ENCODE measurements at regions of chr17 and their contacts with region 1.

Region 1: DNA sequence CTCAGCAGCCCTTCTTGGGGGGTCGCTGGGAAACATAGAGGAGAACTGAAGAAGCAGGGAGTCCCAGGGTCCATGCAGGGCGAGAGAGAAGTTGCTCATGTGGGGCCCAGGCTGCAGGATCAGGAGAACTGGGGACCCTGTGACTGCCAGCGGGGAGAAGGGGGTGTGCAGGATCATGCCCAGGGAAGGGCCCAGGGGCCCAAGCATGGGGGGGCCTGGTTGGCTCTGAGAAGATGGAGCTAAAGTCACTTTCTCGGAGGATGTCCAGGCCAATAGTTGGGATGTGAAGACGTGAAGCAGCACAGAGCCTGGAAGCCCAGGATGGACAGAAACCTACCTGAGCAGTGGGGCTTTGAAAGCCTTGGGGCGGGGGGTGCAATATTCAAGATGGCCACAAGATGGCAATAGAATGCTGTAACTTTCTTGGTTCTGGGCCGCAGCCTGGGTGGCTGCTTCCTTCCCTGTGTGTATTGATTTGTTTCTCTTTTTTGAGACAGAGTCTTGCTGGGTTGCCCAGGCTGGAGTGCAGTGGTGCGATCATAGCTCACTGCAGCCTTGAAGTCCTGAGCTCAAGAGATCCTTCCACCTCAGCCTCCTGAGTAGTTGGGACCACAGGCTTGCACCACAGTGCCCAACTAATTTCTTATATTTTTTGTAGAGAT is 3.4 kb downstream of the STH start:
- DNase-seq: peak; percentile 73
- H3K4me3 Mint-ChIP-seq: no peak overlapping the region
- H3K27ac Mint-ChIP-seq: no peak overlapping the region
- H3K4me1 Mint-ChIP-seq: no peaks in the 10 kb centered on the region
- H3K27me3 Mint-ChIP-seq: peaks cover 10% of the 10 kb centered on the region
- CTCF ChIP-seq: peak; percentile 90

Region 2: DNA sequence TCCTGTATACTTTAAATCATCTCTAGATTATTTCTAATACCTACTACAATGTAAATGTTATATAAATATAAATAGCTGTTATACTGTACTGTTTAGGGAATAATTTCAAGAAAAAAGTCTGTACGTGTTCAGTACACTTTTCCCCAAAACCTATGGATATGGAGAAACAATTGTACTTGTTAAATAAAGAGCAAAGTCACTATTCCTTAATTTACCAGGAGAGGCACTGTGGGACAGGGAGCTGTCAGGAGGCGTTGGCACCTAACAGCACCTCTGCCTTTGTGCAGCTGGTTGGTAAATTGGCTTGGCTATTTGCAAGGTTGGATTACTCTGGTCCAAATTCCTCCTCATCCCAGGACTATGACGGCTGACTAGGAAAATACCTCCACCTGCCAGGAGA is 190.3 kb before region 1 on chr17:
- CTCF ChIA-PET with region 1: no interaction called
- POLR2A ChIA-PET with region 1: no interaction called
- intact Hi-C with region 1: no loop called
- DNase-seq: peak; percentile 30
- H3K4me3 Mint-ChIP-seq: no peak overlapping the region
- H3K27ac Mint-ChIP-seq: no peak overlapping the region
- H3K4me1 Mint-ChIP-seq: no peaks in the 10 kb centered on the region
- H3K27me3 Mint-ChIP-seq: peaks cover 5% of the 10 kb centered on the region
- CTCF ChIP-seq: peak; percentile 20

Region 3: DNA sequence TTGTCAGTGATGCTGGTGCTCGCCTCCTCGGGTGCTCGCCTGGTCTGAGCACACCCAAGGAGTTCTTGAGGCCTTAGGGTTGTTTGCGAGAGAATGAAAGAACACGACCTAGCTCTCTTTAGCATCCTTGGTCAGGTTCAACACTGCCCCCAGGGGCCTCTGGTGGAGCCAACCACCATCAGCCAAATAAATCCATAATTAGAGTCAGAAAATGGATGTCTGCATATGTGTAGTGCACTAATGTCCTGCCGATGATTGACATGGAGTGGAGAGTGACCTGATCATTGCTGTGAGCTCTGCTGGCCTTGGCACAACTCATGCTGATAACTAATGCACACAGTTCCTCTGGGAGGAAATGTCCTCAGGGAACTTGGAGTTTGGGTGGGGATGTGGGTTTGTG is 11.6 kb before region 1 on chr17:
- CTCF ChIA-PET with region 1: interaction called, 14 read pairs
- POLR2A ChIA-PET with region 1: interaction called, 3 read pairs
- intact Hi-C with region 1: no loop called
- DNase-seq: no peak
- H3K4me3 Mint-ChIP-seq: no peak overlapping the region
- H3K27ac Mint-ChIP-seq: no peak overlapping the region
- H3K4me1 Mint-ChIP-seq: no peaks in the 10 kb centered on the region
- H3K27me3 Mint-ChIP-seq: no peaks in the 10 kb centered on the region
- CTCF ChIP-seq: no peak

Region 4: GRCh38 chr17:46013502-46014165 is 11.2 kb after region 1 on chr17:
- CTCF ChIA-PET with region 1: interaction called, 14 read pairs
- POLR2A ChIA-PET with region 1: no interaction called
- intact Hi-C with region 1: no loop called
- DNase-seq: peak; percentile 33
- H3K4me3 Mint-ChIP-seq: no peak overlapping the region
- H3K27ac Mint-ChIP-seq: no peak overlapping the region
- H3K4me1 Mint-ChIP-seq: peaks cover 8% of the 10 kb centered on the region
- H3K27me3 Mint-ChIP-seq: no peaks in the 10 kb centered on the region
- CTCF ChIP-seq: no peak

Region 5: GRCh38 chr17:46020023-46020761 is 17.8 kb after region 1 on chr17:
- CTCF ChIA-PET with region 1: interaction called, 13 read pairs
- POLR2A ChIA-PET with region 1: no interaction called
- intact Hi-C with region 1: no loop called
- DNase-seq: no peak
- H3K4me3 Mint-ChIP-seq: no peak overlapping the region
- H3K27ac Mint-ChIP-seq: no peak overlapping the region
- H3K4me1 Mint-ChIP-seq: no peaks in the 10 kb centered on the region
- H3K27me3 Mint-ChIP-seq: no peaks in the 10 kb centered on the region
- CTCF ChIP-seq: no peak

Region 6: DNA sequence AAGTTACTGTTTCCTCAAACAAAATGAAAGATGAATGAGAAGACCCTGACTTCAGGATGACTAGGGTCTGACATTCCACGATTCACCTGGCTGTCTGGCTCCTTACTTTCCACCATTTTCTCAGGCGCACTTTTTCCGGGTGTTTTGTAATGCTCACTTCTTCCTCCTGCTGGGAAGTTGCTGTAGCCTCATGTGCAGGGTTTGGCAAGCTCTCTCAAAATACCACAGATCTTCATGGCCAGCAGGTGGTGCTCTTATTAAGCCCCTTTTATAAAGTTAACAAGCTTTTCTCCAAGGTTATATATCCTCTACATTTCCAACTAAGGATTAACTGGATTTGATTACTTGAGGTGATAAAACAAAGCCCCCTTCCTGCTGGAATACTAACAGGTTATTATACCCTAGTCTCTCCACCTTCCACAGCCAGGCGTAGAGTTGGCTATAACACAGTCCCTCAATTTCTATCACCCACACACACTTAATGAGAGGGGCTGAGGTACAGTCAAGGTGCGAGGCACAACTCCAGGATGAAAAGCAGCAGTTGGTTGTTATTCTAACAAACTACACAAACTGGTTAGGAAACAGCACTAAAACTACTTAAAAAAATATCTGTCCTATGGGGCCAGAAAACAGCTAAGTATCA is 42.0 kb after region 1 on chr17:
- CTCF ChIA-PET with region 1: interaction called, 11 read pairs
- POLR2A ChIA-PET with region 1: interaction called, 3 read pairs
- intact Hi-C with region 1: loop called (anchors 2 kb)
- DNase-seq: peak; percentile 86
- H3K4me3 Mint-ChIP-seq: no peak overlapping the region
- H3K27ac Mint-ChIP-seq: peak overlapping the region; percentile 61
- H3K4me1 Mint-ChIP-seq: peaks cover 21% of the 10 kb centered on the region
- H3K27me3 Mint-ChIP-seq: no peaks in the 10 kb centered on the region
- CTCF ChIP-seq: peak; percentile 70

Region 7: DNA sequence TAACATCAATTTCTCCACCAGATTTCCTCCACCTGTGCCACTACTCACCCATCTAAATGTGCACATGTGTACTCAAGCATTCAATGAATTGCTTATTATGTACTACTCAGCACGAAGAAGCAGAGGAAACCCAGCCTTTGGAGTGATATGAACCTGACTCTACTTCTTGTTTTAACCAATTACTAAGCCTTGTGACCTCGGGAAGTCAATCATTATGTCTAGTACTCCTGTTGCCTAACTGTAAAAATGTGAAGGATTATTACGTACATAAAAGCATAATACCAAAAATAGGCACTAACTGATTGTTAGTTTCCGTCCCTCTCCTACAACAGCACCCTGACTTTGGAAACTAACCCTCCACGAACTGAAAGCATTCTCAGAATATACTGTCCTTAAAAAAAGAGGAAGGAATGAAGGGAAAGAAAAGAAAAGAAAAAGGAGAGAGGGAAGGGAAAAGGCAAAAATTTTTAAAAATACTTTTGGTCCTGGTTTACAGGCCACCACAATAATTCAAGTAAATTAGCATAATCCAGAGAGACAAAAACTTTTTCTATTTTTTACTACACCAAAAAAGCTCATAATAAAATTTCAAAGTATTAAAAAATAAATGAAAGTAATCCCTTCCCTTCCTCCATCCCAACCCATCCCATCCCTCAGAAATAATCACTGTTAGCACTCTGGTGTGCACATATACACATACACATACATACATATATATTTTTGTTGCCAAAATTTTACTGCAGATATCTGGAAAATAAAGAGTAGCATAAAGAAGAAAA is 137.2 kb after region 1 on chr17:
- CTCF ChIA-PET with region 1: no interaction called
- POLR2A ChIA-PET with region 1: no interaction called
- intact Hi-C with region 1: no loop called
- DNase-seq: no peak
- H3K4me3 Mint-ChIP-seq: no peak overlapping the region
- H3K27ac Mint-ChIP-seq: no peak overlapping the region
- H3K4me1 Mint-ChIP-seq: peaks cover 62% of the 10 kb centered on the region
- H3K27me3 Mint-ChIP-seq: no peaks in the 10 kb centered on the region
- CTCF ChIP-seq: no peak

Region 8: GRCh38 chr17:46179375-46179999 is 177.0 kb after region 1 on chr17:
- CTCF ChIA-PET with region 1: interaction called, 3 read pairs
- POLR2A ChIA-PET with region 1: interaction called, 3 read pairs
- intact Hi-C with region 1: loop called (anchors 10 kb)
- DNase-seq: no peak
- H3K4me3 Mint-ChIP-seq: no peak overlapping the region
- H3K27ac Mint-ChIP-seq: no peak overlapping the region
- H3K4me1 Mint-ChIP-seq: peaks cover 63% of the 10 kb centered on the region
- H3K27me3 Mint-ChIP-seq: no peaks in the 10 kb centered on the region
- CTCF ChIP-seq: no peak

Region 9: DNA sequence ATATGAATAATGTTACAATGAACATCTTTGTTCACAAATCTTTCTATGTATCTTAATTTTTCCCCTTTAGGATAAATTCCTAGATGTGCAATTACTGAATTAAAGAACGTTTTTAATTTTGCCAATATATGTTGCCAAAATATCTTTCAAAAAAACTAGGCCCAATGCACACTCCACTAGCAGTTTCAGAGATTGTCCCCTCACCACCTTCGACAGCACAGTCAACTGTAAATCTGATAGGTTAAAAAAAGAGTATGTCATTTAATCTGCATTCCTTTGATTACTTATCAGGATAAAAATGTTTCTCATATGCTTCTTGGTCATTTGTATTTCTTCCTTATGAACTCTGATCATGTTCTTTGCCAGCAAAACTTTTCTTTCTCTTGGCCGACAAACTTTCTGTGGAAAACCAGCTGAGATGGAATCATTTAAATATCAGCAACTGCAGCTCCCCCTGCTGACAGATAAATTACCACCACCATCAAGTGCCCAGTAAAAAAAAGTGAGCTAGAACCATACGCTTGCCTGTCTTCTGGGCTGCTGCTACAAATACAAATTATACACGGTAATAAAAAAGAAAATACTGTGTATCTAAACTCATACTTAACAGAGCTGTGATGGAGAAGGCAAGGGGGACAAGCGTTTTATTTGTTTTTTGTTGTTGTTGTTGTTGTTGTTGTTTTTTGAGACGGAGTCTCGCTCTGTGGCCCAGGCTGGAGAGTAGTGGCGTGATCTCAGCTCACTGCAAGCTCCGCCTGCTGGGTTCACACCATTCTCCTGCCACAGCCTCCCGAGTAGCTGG is 210.4 kb after region 1 on chr17:
- CTCF ChIA-PET with region 1: interaction called, 61 read pairs
- POLR2A ChIA-PET with region 1: interaction called, 4 read pairs
- intact Hi-C with region 1: loop called (anchors 1 kb)
- DNase-seq: peak; percentile 85
- H3K4me3 Mint-ChIP-seq: no peak overlapping the region
- H3K27ac Mint-ChIP-seq: no peak overlapping the region
- H3K4me1 Mint-ChIP-seq: peaks cover 12% of the 10 kb centered on the region
- H3K27me3 Mint-ChIP-seq: no peaks in the 10 kb centered on the region
- CTCF ChIP-seq: peak; percentile 75